A673 (cell line): ENCODE measurements at regions of chr6 and their contacts with region 1.

Region 1: GRCh38 chr6:20028143-20028542 is 184.1 kb downstream of the MBOAT1 start:
- DNase-seq: no peak
- H3K4me3 ChIP-seq: no peak overlapping the region
- H3K27ac ChIP-seq: no peak overlapping the region
- H3K4me1 ChIP-seq: no peaks in the 10 kb centered on the region
- H3K27me3 ChIP-seq: no peaks in the 10 kb centered on the region
- CTCF ChIP-seq: no peak

Region 2: GRCh38 chr6:20038410-20039204 is 10.5 kb after region 1 on chr6:
- CTCF ChIA-PET with region 1: no interaction called
- POLR2A ChIA-PET with region 1: no interaction called
- intact Hi-C with region 1: no loop called
- DNase-seq: peak; percentile 10
- H3K4me3 ChIP-seq: no peak overlapping the region
- H3K27ac ChIP-seq: no peak overlapping the region
- H3K4me1 ChIP-seq: no peaks in the 10 kb centered on the region
- H3K27me3 ChIP-seq: no peaks in the 10 kb centered on the region
- CTCF ChIP-seq: no peak

Region 3: GRCh38 chr6:20134613-20135012 is 106.5 kb after region 1 on chr6:
- CTCF ChIA-PET with region 1: interaction called, 10 read pairs
- POLR2A ChIA-PET with region 1: no interaction called
- intact Hi-C with region 1: no loop called
- DNase-seq: no peak
- H3K4me3 ChIP-seq: no peak overlapping the region
- H3K27ac ChIP-seq: no peak overlapping the region
- H3K4me1 ChIP-seq: no peaks in the 10 kb centered on the region
- H3K27me3 ChIP-seq: no peaks in the 10 kb centered on the region
- CTCF ChIP-seq: no peak